CD4-positive, alpha-beta T cell (primary cell): ENCODE measurements at regions of chr22 and their contacts with region 1.

Region 1: DNA sequence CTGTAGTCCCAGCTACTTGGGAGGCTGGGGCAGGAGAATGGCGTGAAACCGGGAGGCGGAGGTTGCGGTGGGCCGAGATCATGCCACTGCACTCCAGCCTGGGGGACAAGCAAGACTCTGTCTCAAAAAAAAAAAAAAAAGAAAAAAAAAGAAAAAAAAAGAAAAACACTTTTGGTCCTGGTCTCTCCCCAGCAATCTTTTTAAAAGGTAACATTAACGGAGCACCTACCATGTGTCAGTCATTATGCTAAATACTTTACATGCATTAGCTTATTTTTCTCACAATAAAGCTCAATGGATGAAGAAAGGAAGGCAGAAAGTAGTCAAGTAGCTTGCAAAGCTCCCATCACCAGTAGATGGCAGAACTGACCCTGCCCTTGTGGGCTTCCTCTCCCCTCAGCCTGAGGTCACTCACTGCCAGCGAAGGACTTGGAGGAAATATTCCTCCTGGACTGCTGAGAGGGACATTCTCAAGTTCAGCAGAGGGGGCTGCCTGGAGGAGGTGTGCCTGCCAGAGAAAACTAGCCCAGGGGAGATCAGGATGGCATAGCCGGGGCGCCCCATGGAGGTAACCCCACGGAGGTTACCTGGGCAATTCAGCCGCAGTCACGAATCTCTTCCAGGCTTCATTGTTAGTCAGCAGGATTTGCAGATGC is 15.5 kb downstream of the APOL3 start:
- DNase-seq: peak in 5 of 14 experiments; percentile 34 to 70 (median 47)
- ATAC-seq: peak; percentile 62
- H3K4me3 ChIP-seq: no peak overlapping the region
- H3K4me3 Mint-ChIP-seq: no peak overlapping the region
- H3K27ac ChIP-seq: no peak overlapping the region
- H3K27ac Mint-ChIP-seq: peak overlapping the region; percentile 64
- H3K4me1 ChIP-seq: peaks cover 21% of the 10 kb centered on the region
- H3K4me1 Mint-ChIP-seq: peaks cover 27% of the 10 kb centered on the region
- H3K27me3 ChIP-seq: no peaks in the 10 kb centered on the region
- H3K27me3 Mint-ChIP-seq: no peaks in the 10 kb centered on the region
- CTCF ChIP-seq: peak; percentile 51

Region 2: GRCh38 chr22:36221799-36222751 is 77.1 kb after region 1 on chr22:
- CTCF ChIA-PET with region 1: no interaction called
- POLR2A ChIA-PET with region 1: no interaction called
- intact Hi-C with region 1: loop called in 1 of 2 experiments (anchors 5 kb)
- DNase-seq: peak in 13 of 14 experiments; percentile 27 to 77 (median 50)
- ATAC-seq: peak; percentile 81
- H3K4me3 ChIP-seq: no peak overlapping the region
- H3K4me3 Mint-ChIP-seq: no peak overlapping the region
- H3K27ac ChIP-seq: no peak overlapping the region
- H3K27ac Mint-ChIP-seq: no peak overlapping the region
- H3K4me1 ChIP-seq: peaks cover 3% of the 10 kb centered on the region
- H3K4me1 Mint-ChIP-seq: peaks cover 7% of the 10 kb centered on the region
- H3K27me3 ChIP-seq: no peaks in the 10 kb centered on the region
- H3K27me3 Mint-ChIP-seq: peaks cover 13% of the 10 kb centered on the region
- CTCF ChIP-seq: peak; percentile 72